ENCODE measurements at regions of chr1 and their contacts with region 1.

Region 1: DNA sequence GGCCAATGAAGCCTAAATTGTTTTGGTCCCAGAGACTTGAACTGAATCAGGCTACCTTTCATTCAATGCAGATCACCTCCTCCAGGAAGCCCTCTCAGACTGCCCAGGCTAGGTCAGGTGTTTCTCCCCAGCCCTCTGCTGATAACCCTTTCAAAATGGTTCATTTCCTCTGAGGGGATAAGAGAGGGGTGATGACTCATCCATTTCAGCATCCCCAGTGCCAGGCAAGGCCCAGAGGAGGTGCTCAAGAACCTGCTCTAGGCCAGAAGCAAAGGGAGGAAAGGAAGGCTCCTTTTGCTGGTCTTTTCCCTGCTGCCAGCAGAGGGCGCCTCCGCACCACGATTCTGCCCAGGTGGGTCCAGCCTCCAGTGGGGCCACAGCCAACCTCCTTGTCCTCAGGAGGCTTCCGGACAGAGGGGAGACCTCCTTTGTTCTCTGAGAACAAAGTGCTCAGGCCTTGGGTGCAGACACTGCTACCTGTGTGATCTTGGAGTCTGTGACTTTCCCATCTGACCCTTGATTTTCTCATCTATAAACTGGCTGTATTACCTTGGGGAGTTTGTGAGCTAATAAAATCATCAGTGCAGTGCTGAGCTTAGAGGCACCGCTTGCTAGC is 45.3 kb upstream of the ARHGEF10L start:
- DNase-seq: peak; percentile 73
- H3K4me3 ChIP-seq: no peak overlapping the region
- H3K27ac ChIP-seq: no peak overlapping the region
- H3K4me1 ChIP-seq: peaks cover 0 to 4% (median 0%) of the 10 kb centered on the region in 4 donors
- H3K27me3 ChIP-seq: no peaks in the 10 kb centered on the region
- CTCF ChIP-seq: peak; percentile 79 to 89 (median 86)
- EP300 ChIP-seq: no peak
- POLR2A ChIP-seq: no peak

Region 2: GRCh38 chr1:17427696-17428660 is 66.2 kb before region 1 on chr1:
- in situ Hi-C with region 1: no loop called
- intact Hi-C with region 1: no loop called
- DNase-seq: peak; percentile 59
- H3K4me3 ChIP-seq: no peak overlapping the region
- H3K27ac ChIP-seq: peak overlapping the region in 2 of 4 donors; percentile 28 to 46
- H3K4me1 ChIP-seq: peaks cover 2 to 68% (median 18%) of the 10 kb centered on the region in 4 donors
- H3K27me3 ChIP-seq: no peaks in the 10 kb centered on the region
- CTCF ChIP-seq: no peak
- EP300 ChIP-seq: no peak
- POLR2A ChIP-seq: no peak

Region 3: DNA sequence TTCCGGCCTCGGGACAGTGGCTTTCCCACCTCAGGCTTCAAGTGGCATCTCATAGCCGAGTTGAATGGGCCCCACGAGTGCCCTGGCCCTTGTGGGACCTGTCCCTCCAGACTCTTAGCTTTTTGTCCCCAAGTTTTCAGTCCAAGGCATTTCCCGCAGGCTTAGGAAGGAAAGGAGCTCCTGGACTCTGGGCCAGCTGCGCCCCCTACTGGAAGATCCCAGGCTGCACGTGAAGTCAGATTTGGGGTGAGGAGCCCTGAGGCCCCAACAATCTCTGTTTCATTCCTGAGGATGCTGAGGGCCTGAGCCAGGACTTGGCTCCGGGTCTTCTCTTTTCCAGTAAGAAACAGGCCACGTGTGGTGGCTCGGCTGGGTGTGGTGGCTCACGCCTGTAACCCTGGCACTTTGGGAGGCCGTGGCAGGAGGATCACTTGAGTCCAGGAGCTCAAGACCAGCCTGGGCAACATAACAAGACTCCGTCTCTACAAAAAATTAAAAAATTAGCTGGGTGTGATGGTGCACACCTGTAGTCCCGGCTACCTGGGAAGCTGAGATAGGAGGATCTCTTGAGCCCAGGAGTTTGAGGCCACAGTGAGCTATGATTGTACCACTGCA is 112.7 kb after region 1 on chr1:
- in situ Hi-C with region 1: no loop called
- intact Hi-C with region 1: loop called (anchors 2 kb)
- DNase-seq: peak; percentile 77
- H3K4me3 ChIP-seq: no peak overlapping the region
- H3K27ac ChIP-seq: peak overlapping the region; percentile 19 to 74 (median 60)
- H3K4me1 ChIP-seq: peaks cover 11 to 28% (median 27%) of the 10 kb centered on the region in 4 donors
- H3K27me3 ChIP-seq: no peaks in the 10 kb centered on the region
- CTCF ChIP-seq: peak; percentile 89 to 96 (median 92)
- EP300 ChIP-seq: no peak
- POLR2A ChIP-seq: no peak

Region 4: GRCh38 chr1:17723684-17724083 is 229.5 kb after region 1 on chr1:
- in situ Hi-C with region 1: no loop called
- intact Hi-C with region 1: no loop called
- DNase-seq: no peak
- H3K4me3 ChIP-seq: no peak overlapping the region
- H3K27ac ChIP-seq: no peak overlapping the region
- H3K4me1 ChIP-seq: no peaks in the 10 kb centered on the region
- H3K27me3 ChIP-seq: no peaks in the 10 kb centered on the region
- CTCF ChIP-seq: no peak
- EP300 ChIP-seq: no peak
- POLR2A ChIP-seq: no peak

Region 5: DNA sequence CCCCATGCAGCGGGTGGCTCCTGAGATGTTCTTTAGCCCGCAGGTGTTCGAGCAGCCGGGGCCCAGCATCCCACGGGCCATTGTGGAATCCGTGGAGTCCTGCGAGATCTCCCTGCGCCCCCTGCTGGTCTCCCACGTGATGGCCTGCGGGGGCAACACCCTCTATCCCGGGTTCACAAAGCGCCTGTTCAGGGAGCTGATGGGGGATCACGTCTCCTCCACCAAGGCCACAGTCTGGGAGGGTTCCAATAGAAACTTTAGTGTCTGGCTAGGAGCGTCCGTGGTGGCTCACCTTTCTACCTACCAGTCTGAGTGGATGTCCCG is 331.9 kb after region 1 on chr1:
- in situ Hi-C with region 1: loop called in 2 of 4 experiments (anchors 25 kb)
- intact Hi-C with region 1: no loop called
- DNase-seq: peak; percentile 61
- H3K4me3 ChIP-seq: no peak overlapping the region
- H3K27ac ChIP-seq: no peak overlapping the region
- H3K4me1 ChIP-seq: no peaks in the 10 kb centered on the region
- H3K27me3 ChIP-seq: peaks cover 22% of the 10 kb centered on the region
- CTCF ChIP-seq: peak; percentile 58 to 72 (median 70)
- EP300 ChIP-seq: no peak
- POLR2A ChIP-seq: no peak

Measured in transverse colon (tissue), 4 donors.